ENCODE measurements at regions of chr3 and their contacts with region 1.

Region 1: GRCh38 chr3:122793568-122794416 is at the start of gene HSPBAP1:
- DNase-seq: peak; percentile 92 to 95 (median 93)
- H3K4me3 ChIP-seq: peak within 1 kb of the TSS; percentile 85 to 96 (median 93)
- H3K4me3 Mint-ChIP-seq: no peak within 1 kb of the TSS
- H3K27ac ChIP-seq: peak within 1 kb of the TSS; percentile 96 to 99
- H3K27ac Mint-ChIP-seq: peak within 1 kb of the TSS; percentile 99 to 100 (median 99)
- H3K4me1 ChIP-seq: peaks cover 69 to 85% of the 10 kb centered on the region in 2 donors
- H3K4me1 Mint-ChIP-seq: peaks cover 34% of the 10 kb centered on the region
- H3K27me3 ChIP-seq: no peaks in the 10 kb centered on the region
- H3K27me3 Mint-ChIP-seq: no peaks in the 10 kb centered on the region
- CTCF ChIP-seq: no peak
- polyA plus RNA-seq, gene HSPBAP1: 11.7 to 48.2 (median 11.9) TPM

Region 2: GRCh38 chr3:122697952-122698620 is 95.7 kb before region 1 on chr3:
- intact Hi-C with region 1: no loop called
- DNase-seq: no peak
- H3K4me3 ChIP-seq: no peak overlapping the region
- H3K4me3 Mint-ChIP-seq: no peak overlapping the region
- H3K27ac ChIP-seq: no peak overlapping the region
- H3K27ac Mint-ChIP-seq: no peak overlapping the region
- H3K4me1 ChIP-seq: no peaks in the 10 kb centered on the region
- H3K4me1 Mint-ChIP-seq: no peaks in the 10 kb centered on the region
- H3K27me3 ChIP-seq: no peaks in the 10 kb centered on the region
- H3K27me3 Mint-ChIP-seq: no peaks in the 10 kb centered on the region
- CTCF ChIP-seq: no peak

Region 3: GRCh38 chr3:122754929-122755328 is 38.9 kb before region 1 on chr3:
- intact Hi-C with region 1: loop called (anchors 5 kb)
- DNase-seq: peak; percentile 64 to 73 (median 65)
- H3K4me3 ChIP-seq: no peak overlapping the region
- H3K4me3 Mint-ChIP-seq: no peak overlapping the region
- H3K27ac ChIP-seq: peak overlapping the region in 1 of 2 donors; percentile 5
- H3K27ac Mint-ChIP-seq: peak overlapping the region in 1 of 7 donors; percentile 66
- H3K4me1 ChIP-seq: peaks cover 28 to 30% of the 10 kb centered on the region in 2 donors
- H3K4me1 Mint-ChIP-seq: peaks cover 39% of the 10 kb centered on the region
- H3K27me3 ChIP-seq: no peaks in the 10 kb centered on the region
- H3K27me3 Mint-ChIP-seq: no peaks in the 10 kb centered on the region
- CTCF ChIP-seq: peak; percentile 90

Region 4: DNA sequence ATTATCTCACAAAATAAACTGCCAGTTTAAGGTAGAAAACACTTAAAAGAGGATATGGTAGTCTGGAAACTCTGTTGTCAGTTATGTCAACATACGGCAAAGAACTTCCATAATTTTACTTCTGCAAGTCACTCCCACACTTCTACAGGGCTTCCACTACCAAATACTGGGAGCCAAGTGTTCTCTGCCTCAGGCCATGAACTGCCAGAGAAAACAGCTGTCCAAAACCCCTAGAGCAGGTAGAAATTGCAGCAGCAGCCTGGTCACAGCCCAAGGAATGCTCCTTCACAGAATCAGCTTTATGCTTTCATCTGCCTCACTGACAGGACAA is 25.8 kb before region 1 on chr3:
- intact Hi-C with region 1: loop called (anchors 2 kb)
- DNase-seq: peak; percentile 60 to 85 (median 76)
- H3K4me3 ChIP-seq: peak overlapping the region in 2 of 3 experiments; percentile 19 to 48
- H3K4me3 Mint-ChIP-seq: peak overlapping the region; percentile 24 to 55
- H3K27ac ChIP-seq: peak overlapping the region; percentile 89 to 93
- H3K27ac Mint-ChIP-seq: peak overlapping the region; percentile 98 to 99 (median 99)
- H3K4me1 ChIP-seq: peaks cover 69 to 70% of the 10 kb centered on the region in 2 donors
- H3K4me1 Mint-ChIP-seq: peaks cover 63% of the 10 kb centered on the region
- H3K27me3 ChIP-seq: no peaks in the 10 kb centered on the region
- H3K27me3 Mint-ChIP-seq: peaks cover 0 to 1% (median 0%) of the 10 kb centered on the region in 3 donors
- CTCF ChIP-seq: no peak

Region 5: DNA sequence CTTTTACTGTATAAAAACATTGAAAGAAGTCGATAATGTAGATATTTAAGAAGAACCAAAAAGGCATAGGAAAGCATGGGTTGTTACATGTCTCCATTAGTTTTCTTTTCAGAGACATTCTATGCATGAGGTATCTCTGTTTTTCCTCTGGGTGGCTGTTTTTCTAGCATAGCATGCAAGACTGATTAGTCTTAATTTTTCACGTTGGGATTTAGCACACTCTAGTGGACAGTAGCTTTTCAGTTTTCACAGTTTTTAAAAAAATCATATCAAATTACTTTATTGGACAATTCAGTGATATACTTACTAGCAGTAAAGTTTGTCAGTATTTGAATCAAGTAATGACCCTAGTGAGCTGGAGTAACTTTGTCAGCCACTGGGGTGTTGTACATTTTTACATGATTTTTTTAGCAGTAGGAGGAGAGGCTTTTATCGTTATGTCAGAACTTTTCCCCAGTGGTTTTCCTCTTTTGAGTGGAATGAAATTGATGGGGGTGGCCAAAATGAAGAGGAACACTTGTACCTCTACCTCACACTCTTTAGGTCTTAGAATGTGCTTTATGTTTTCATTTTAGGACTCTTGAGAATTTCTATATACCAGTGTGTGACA is 465.1 kb after region 1 on chr3:
- intact Hi-C with region 1: no loop called
- DNase-seq: peak in 2 of 3 donors; percentile 15 to 16
- H3K4me3 ChIP-seq: no peak overlapping the region
- H3K4me3 Mint-ChIP-seq: no peak overlapping the region
- H3K27ac ChIP-seq: no peak overlapping the region
- H3K27ac Mint-ChIP-seq: no peak overlapping the region
- H3K4me1 ChIP-seq: no peaks in the 10 kb centered on the region
- H3K4me1 Mint-ChIP-seq: no peaks in the 10 kb centered on the region
- H3K27me3 ChIP-seq: no peaks in the 10 kb centered on the region
- H3K27me3 Mint-ChIP-seq: peaks cover 0 to 2% (median 0%) of the 10 kb centered on the region in 3 donors
- CTCF ChIP-seq: peak; percentile 72

Region 6: GRCh38 chr3:124730129-124730940 is 1936.5 kb after region 1 on chr3 and contains the start of gene UMPS:
- intact Hi-C with region 1: loop called in 1 of 2 experiments (anchors 10 kb)
- DNase-seq: peak; percentile 80 to 91 (median 81)
- H3K4me3 ChIP-seq: peak within 1 kb of the TSS; percentile 81 to 95 (median 87)
- H3K4me3 Mint-ChIP-seq: peak within 1 kb of the TSS; percentile 99 to 100
- H3K27ac ChIP-seq: peak within 1 kb of the TSS; percentile 44 to 92
- H3K27ac Mint-ChIP-seq: peak within 1 kb of the TSS; percentile 94 to 99 (median 97)
- H3K4me1 ChIP-seq: peaks cover 12 to 13% of the 10 kb centered on the region in 2 donors
- H3K4me1 Mint-ChIP-seq: peaks cover 22% of the 10 kb centered on the region
- H3K27me3 ChIP-seq: peaks cover 14 to 35% of the 10 kb centered on the region in 2 donors
- H3K27me3 Mint-ChIP-seq: peaks cover 17 to 33% (median 19%) of the 10 kb centered on the region in 3 donors
- CTCF ChIP-seq: no peak
- polyA plus RNA-seq, gene UMPS: 4.6 to 13.5 (median 9.1) TPM